Right cardiac atrium (tissue), 5 donors: ENCODE measurements at regions of chr3 and their contacts with region 1.

Region 1: GRCh38 chr3:150495563-150496168 is 50.6 kb downstream of the SERP1 start:
- DNase-seq: no peak
- ATAC-seq: no peak
- H3K4me3 ChIP-seq: no peak overlapping the region
- H3K27ac ChIP-seq: no peak overlapping the region
- H3K4me1 ChIP-seq: no peaks in the 10 kb centered on the region
- H3K27me3 ChIP-seq: no peaks in the 10 kb centered on the region

Region 2: GRCh38 chr3:149969940-149970715 is 525.5 kb before region 1 on chr3:
- intact Hi-C with region 1: loop called in 2 of 4 experiments (anchors 10 kb)
- DNase-seq: peak; percentile 86 to 91 (median 89)
- ATAC-seq: peak; percentile 80 to 83
- H3K4me3 ChIP-seq: peak overlapping the region; percentile 75
- H3K27ac ChIP-seq: peak overlapping the region; percentile 94
- H3K4me1 ChIP-seq: no peaks in the 10 kb centered on the region
- H3K27me3 ChIP-seq: no peaks in the 10 kb centered on the region

Region 3: DNA sequence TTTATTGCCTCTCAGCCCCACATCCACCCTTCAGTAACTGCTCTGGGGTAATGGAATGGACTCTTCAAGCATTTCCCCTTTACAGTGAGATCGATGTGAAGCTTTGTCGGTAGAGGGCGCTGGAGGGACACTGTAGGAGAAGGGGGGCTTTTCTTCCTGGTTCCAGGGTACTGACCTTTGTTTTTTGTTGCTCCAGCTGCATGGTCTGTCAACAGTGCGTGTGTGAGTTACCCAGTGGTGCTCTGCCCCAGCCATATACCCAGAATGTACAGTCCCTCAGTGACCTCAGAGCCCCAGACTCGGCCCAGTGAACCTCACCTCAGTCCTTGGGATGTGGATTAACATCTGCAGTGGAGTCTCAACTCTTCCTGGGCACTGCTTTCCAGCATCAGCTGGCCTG is 267.8 kb before region 1 on chr3:
- intact Hi-C with region 1: loop called (anchors 5 to 10 kb)
- DNase-seq: peak in 2 of 3 donors; percentile 27 to 74
- ATAC-seq: peak; percentile 12 to 26
- H3K4me3 ChIP-seq: no peak overlapping the region
- H3K27ac ChIP-seq: no peak overlapping the region
- H3K4me1 ChIP-seq: no peaks in the 10 kb centered on the region
- H3K27me3 ChIP-seq: no peaks in the 10 kb centered on the region

Region 4: GRCh38 chr3:150286390-150287147 is 209.1 kb before region 1 on chr3:
- intact Hi-C with region 1: loop called in 3 of 4 experiments (anchors 10 kb)
- DNase-seq: no peak
- ATAC-seq: peak; percentile 67 to 80
- H3K4me3 ChIP-seq: no peak overlapping the region
- H3K27ac ChIP-seq: no peak overlapping the region
- H3K4me1 ChIP-seq: no peaks in the 10 kb centered on the region
- H3K27me3 ChIP-seq: no peaks in the 10 kb centered on the region